Heart right ventricle (tissue), 16 donors: ENCODE measurements at regions of chr2 and their contacts with region 1.

Region 1: GRCh38 chr2:15649556-15650255 is 58.0 kb downstream of the DDX1 start:
- DNase-seq: no peak
- ATAC-seq: peak in 2 of 8 donors; percentile 13 to 27
- H3K4me3 ChIP-seq: no peak overlapping the region
- H3K27ac ChIP-seq: no peak overlapping the region
- H3K4me1 ChIP-seq: peaks cover 0 to 10% (median 0%) of the 10 kb centered on the region in 9 donors
- H3K27me3 ChIP-seq: no peaks in the 10 kb centered on the region
- CTCF ChIP-seq: no peak

Region 2: GRCh38 chr2:15708865-15709820 is 59.4 kb after region 1 on chr2:
- intact Hi-C with region 1: loop called in 1 of 10 experiments (anchors 5 kb)
- DNase-seq: peak in 1 of 2 donors; percentile 40
- ATAC-seq: peak; percentile 44 to 80 (median 74)
- H3K4me3 ChIP-seq: no peak overlapping the region
- H3K27ac ChIP-seq: peak overlapping the region in 8 of 10 donors; percentile 46 to 86 (median 64)
- H3K4me1 ChIP-seq: peaks cover 0 to 35% (median 19%) of the 10 kb centered on the region in 9 donors
- H3K27me3 ChIP-seq: no peaks in the 10 kb centered on the region
- CTCF ChIP-seq: no peak

Region 3: DNA sequence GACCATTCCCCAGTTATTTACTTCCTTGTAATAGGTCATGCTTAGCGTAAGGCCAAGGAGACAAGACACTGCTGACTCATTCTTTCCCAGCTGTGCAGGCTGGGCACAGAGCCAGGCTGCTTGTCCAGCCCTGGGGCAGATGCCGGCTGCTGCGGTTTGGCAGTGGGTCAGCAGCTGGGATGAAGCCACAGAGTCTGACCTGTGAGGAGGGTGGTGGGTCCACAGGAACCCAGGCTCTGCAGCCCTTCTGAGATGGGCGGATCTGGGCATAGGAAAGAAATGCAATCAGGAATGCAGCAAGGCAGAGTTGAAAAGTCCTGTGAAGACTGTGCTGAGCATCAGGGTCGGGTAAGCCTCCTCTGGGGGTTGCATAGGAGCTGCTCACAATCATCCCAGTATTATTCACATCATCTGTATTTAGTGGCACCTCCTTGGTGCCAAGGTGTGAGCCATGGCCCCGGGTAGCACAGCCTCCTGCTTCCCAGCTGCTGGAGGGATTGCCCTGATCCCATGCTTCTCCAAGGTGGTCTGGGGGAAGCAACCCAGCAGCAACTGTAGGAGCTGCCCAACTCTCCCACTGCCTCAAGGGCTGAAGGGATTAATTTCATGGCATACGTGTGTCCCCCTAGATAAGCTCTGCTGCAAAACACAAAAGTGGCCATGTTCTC is 81.0 kb after region 1 on chr2:
- intact Hi-C with region 1: loop called in 2 of 10 experiments (anchors 5 to 10 kb)
- DNase-seq: peak; percentile 94 to 95
- ATAC-seq: peak; percentile 86 to 96 (median 94)
- H3K4me3 ChIP-seq: no peak overlapping the region
- H3K27ac ChIP-seq: peak overlapping the region in 4 of 10 donors; percentile 6 to 77 (median 54)
- H3K4me1 ChIP-seq: peaks cover 26 to 59% (median 51%) of the 10 kb centered on the region in 9 donors
- H3K27me3 ChIP-seq: no peaks in the 10 kb centered on the region
- CTCF ChIP-seq: no peak

Region 4: GRCh38 chr2:15808204-15808910 is 158.7 kb after region 1 on chr2:
- intact Hi-C with region 1: no loop called
- DNase-seq: no peak
- ATAC-seq: no peak
- H3K4me3 ChIP-seq: no peak overlapping the region
- H3K27ac ChIP-seq: no peak overlapping the region
- H3K4me1 ChIP-seq: peaks cover 0 to 14% (median 0%) of the 10 kb centered on the region in 9 donors
- H3K27me3 ChIP-seq: no peaks in the 10 kb centered on the region
- CTCF ChIP-seq: no peak